GM10248 (cell line): ENCODE measurements at regions of chr9 and their contacts with region 1.

Region 1: GRCh38 chr9:123863164-123863855 is 66.6 kb downstream of the DENND1A start:
- DNase-seq: no peak
- CTCF ChIP-seq: no peak

Region 2: GRCh38 chr9:123851851-123852250 is 11.5 kb before region 1 on chr9:
- CTCF ChIA-PET with region 1: interaction called, 10 read pairs
- POLR2A ChIA-PET with region 1: no interaction called
- DNase-seq: no peak
- CTCF ChIP-seq: no peak

Region 3: DNA sequence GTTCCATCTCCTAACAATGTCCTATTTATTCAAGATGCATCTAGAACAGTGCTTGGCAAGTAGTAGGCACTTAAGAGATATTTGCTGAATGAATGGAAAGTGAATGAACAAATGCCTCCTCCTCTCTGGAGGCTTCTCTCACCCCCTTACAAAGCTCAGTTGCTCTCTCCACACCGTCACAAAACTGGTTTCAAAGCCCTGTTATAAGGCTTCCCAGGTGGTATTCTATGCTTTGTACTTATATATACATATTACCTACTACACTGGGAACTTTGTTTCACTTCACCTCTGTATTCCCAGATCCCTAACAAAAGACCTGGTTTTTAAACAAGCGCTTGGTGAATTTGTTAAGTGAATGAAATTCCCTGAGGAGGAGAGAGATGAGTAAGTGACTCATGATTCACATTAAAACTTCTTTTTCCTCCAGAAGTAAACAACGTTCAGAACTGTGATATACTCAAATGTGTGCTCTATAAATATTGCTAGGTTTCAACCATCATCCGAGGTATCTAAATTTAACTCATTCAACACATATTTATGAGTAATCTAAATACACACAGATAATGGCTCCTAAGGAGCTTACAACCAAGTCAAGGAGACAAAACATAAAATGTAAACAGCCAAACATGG is 30.6 kb after region 1 on chr9:
- CTCF ChIA-PET with region 1: no interaction called
- POLR2A ChIA-PET with region 1: no interaction called
- DNase-seq: no peak
- CTCF ChIP-seq: no peak